ENCODE measurements at regions of chr5 and their contacts with region 1.

Region 1: DNA sequence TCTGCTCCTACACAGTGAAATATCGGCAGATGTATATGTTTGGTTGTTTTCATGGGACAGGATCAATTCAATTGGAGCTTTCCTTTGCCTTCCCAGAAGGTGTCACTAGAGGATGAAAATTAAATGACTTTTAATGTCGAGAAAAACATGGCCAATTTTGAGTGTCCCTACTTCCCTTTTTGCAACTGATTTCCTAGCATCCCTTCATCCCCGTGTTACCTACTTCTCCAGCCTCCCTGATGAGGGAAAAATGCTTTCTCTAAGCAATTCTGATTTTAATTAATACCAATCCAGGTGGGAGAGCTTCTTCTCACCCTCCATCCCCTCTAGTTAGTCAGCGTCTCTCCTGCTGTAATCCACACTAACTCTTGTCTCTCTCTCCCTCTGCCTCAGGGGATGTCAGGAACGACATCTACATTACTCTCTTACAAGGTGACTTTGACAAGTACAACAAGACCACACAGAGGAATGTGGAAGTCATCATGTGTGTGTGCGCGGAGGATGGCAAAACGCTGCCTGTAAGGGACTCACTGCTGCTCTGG is 64.9 kb downstream of the DOCK2 start:
- DNase-seq: no peak
- ATAC-seq: peak; percentile 70
- H3K4me3 Mint-ChIP-seq: no peak overlapping the region
- H3K27ac Mint-ChIP-seq: no peak overlapping the region
- H3K4me1 Mint-ChIP-seq: peaks cover 10% of the 10 kb centered on the region
- H3K27me3 Mint-ChIP-seq: no peaks in the 10 kb centered on the region
- CTCF ChIP-seq: no peak

Region 2: GRCh38 chr5:169686137-169686536 is 15.8 kb before region 1 on chr5:
- CTCF ChIA-PET with region 1: no interaction called
- POLR2A ChIA-PET with region 1: no interaction called
- DNase-seq: no peak
- ATAC-seq: no peak
- H3K4me3 Mint-ChIP-seq: no peak overlapping the region
- H3K27ac Mint-ChIP-seq: no peak overlapping the region
- H3K4me1 Mint-ChIP-seq: no peaks in the 10 kb centered on the region
- H3K27me3 Mint-ChIP-seq: no peaks in the 10 kb centered on the region
- CTCF ChIP-seq: no peak

Region 3: GRCh38 chr5:169832845-169833244 is 130.9 kb after region 1 on chr5:
- CTCF ChIA-PET with region 1: no interaction called
- POLR2A ChIA-PET with region 1: no interaction called
- DNase-seq: no peak
- ATAC-seq: no peak
- H3K4me3 Mint-ChIP-seq: no peak overlapping the region
- H3K27ac Mint-ChIP-seq: no peak overlapping the region
- H3K4me1 Mint-ChIP-seq: no peaks in the 10 kb centered on the region
- H3K27me3 Mint-ChIP-seq: no peaks in the 10 kb centered on the region
- CTCF ChIP-seq: no peak

Region 4: GRCh38 chr5:169970911-169971765 is 269.2 kb after region 1 on chr5:
- CTCF ChIA-PET with region 1: interaction called, 12 read pairs
- POLR2A ChIA-PET with region 1: no interaction called
- DNase-seq: no peak
- ATAC-seq: peak; percentile 53
- H3K4me3 Mint-ChIP-seq: no peak overlapping the region
- H3K27ac Mint-ChIP-seq: no peak overlapping the region
- H3K4me1 Mint-ChIP-seq: peaks cover 11% of the 10 kb centered on the region
- H3K27me3 Mint-ChIP-seq: peaks cover 7% of the 10 kb centered on the region
- CTCF ChIP-seq: no peak